A549 (cell line): ENCODE measurements at regions of chr2 and their contacts with region 1.

Region 1: GRCh38 chr2:10434886-10435819 is 13.0 kb downstream of the ODC1 start:
- DNase-seq: peak; percentile 80 to 91
- ATAC-seq: peak; percentile 60 to 87
- H3K4me3 ChIP-seq: no peak overlapping the region
- H3K27ac ChIP-seq: peak overlapping the region in 1 of 2 experiments; percentile 68; a peak in 4 of 6 replicates
- H3K4me1 ChIP-seq: peaks cover 18% of the 10 kb centered on the region
- CTCF ChIP-seq: peak; percentile 99
- EP300 ChIP-seq: no peak
- POLR2A ChIP-seq: no peak
- RAD21 ChIP-seq: peak; percentile 100

Region 2: GRCh38 chr2:9952846-9953503 is 482.2 kb before region 1 on chr2:
- CTCF ChIA-PET with region 1: no interaction called
- POLR2A ChIA-PET with region 1: no interaction called
- DNase-seq: no peak
- ATAC-seq: no peak
- H3K4me3 ChIP-seq: no peak overlapping the region
- H3K27ac ChIP-seq: no peak overlapping the region
- H3K4me1 ChIP-seq: no peaks in the 10 kb centered on the region
- CTCF ChIP-seq: no peak
- EP300 ChIP-seq: no peak
- POLR2A ChIP-seq: no peak
- RAD21 ChIP-seq: no peak

Region 3: GRCh38 chr2:9984217-9984739 is 450.9 kb before region 1 on chr2:
- CTCF ChIA-PET with region 1: interaction called, 11 read pairs
- POLR2A ChIA-PET with region 1: no interaction called
- DNase-seq: peak; percentile 46 to 90
- ATAC-seq: peak; percentile 63 to 89
- H3K4me3 ChIP-seq: no peak overlapping the region
- H3K27ac ChIP-seq: no peak overlapping the region
- H3K4me1 ChIP-seq: 0 out of 3 replicates have a peak, but pooled peaks cover 3% of the 10 kb centered on the region
- CTCF ChIP-seq: peak; percentile 77
- EP300 ChIP-seq: no peak
- POLR2A ChIP-seq: no peak
- RAD21 ChIP-seq: peak; percentile 61 to 66

Region 4: GRCh38 chr2:10097352-10098148 is 337.6 kb before region 1 on chr2:
- CTCF ChIA-PET with region 1: interaction called, 21 read pairs
- POLR2A ChIA-PET with region 1: no interaction called
- DNase-seq: peak; percentile 70 to 97
- ATAC-seq: peak; percentile 97 to 99
- H3K4me3 ChIP-seq: no peak overlapping the region
- H3K27ac ChIP-seq: no peak overlapping the region
- H3K4me1 ChIP-seq: peaks cover 5% of the 10 kb centered on the region
- CTCF ChIP-seq: peak; percentile 88
- EP300 ChIP-seq: no peak
- POLR2A ChIP-seq: no peak
- RAD21 ChIP-seq: peak; percentile 81 to 86

Region 5: DNA sequence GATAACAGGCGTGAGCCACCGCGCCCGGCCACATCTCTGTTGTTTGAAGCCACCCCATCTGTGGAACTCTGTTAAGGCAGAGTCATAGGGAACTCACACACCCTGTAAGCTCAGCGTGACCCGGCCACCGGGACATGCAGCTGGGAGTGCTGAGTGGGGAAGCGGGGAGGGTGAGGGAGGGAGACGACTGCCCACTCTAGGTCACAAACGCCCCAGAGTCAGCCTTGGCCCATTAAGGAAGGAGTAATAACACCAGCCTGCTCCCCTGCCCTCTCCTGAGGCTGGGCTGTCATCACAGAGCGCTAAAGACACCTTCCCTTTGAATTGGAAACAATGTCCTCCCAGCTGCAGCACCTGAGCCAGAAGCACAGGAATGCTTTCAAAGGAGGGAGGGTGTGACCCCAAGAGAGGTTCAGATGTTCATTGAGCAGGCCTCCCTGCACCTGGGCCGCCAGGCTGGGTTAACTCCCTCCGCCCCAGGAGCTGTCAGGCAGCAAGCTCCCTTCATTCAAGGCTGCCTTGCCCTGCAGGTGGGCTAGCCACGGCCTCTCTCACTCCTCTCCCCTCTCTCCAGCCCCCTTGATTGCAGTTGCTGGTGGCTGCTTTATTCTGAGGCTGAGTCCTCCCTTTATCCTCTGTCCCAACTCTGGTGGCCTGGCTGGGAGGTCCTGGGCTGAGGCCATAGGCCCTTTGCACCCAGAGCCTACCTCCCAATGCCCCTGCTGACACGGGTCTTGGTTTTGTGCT is 209.7 kb before region 1 on chr2:
- CTCF ChIA-PET with region 1: interaction called, 12 read pairs
- POLR2A ChIA-PET with region 1: no interaction called
- DNase-seq: no peak
- ATAC-seq: no peak; a peak in 1 of 6 replicates
- H3K4me3 ChIP-seq: no peak overlapping the region
- H3K27ac ChIP-seq: no peak overlapping the region
- H3K4me1 ChIP-seq: peaks cover 6% of the 10 kb centered on the region; the same call in 1 of the 3 replicates
- CTCF ChIP-seq: no peak
- EP300 ChIP-seq: no peak
- POLR2A ChIP-seq: no peak
- RAD21 ChIP-seq: no peak

Region 6: DNA sequence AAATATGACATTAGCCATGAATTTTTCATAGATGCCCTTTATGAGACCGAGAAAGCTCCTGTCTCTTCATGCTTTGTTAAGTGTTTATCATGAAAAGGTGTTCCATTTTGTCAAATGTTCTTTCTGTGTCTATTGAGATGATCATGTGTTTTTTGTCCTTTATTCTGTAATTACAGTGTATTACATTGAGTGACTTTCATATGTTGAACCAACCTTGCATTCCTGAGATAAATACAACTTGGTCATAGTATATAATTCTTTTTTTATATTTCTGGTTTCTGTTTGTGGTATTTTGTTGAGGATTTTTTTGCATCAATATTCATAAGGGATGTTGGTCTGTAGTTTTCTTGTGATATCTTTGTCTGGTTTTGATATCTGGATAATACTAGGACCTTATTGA is 185.4 kb before region 1 on chr2:
- CTCF ChIA-PET with region 1: no interaction called
- POLR2A ChIA-PET with region 1: no interaction called
- DNase-seq: no peak
- ATAC-seq: no peak
- H3K4me3 ChIP-seq: no peak overlapping the region
- H3K27ac ChIP-seq: no peak overlapping the region
- H3K4me1 ChIP-seq: peaks cover 9% of the 10 kb centered on the region
- CTCF ChIP-seq: no peak
- EP300 ChIP-seq: no peak
- POLR2A ChIP-seq: no peak
- RAD21 ChIP-seq: no peak

Region 7: DNA sequence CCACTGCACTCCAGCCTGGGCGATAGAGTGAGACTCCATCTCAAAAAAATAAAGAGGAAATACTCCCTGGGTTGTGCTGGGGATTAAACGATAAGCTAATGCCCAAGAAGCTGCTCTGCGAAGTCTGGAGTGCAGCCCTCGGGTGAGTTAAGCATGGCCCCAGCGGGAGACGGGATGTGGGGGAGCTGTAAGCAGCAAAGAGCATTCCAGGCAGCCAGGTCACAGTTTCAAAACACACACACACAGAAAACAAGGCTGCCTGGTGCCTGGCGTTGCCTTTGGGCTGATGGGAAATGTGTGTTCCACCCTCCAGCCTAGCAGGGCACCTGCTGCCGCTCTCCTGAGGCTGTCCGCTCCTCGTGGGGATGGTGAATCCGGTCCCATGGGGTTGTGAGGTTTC is 11.1 kb before region 1 on chr2:
- CTCF ChIA-PET with region 1: interaction called, 114 read pairs
- POLR2A ChIA-PET with region 1: no interaction called
- DNase-seq: no peak
- ATAC-seq: no peak
- H3K4me3 ChIP-seq: no peak overlapping the region
- H3K27ac ChIP-seq: no peak overlapping the region
- H3K4me1 ChIP-seq: no peaks in the 10 kb centered on the region
- CTCF ChIP-seq: no peak
- EP300 ChIP-seq: no peak
- POLR2A ChIP-seq: no peak
- RAD21 ChIP-seq: no peak

Region 8: GRCh38 chr2:10471956-10472355 is 36.8 kb after region 1 on chr2:
- CTCF ChIA-PET with region 1: interaction called, 18 read pairs
- POLR2A ChIA-PET with region 1: no interaction called
- DNase-seq: peak in 1 of 2 experiments; percentile 37
- ATAC-seq: peak; percentile 72 to 75
- H3K4me3 ChIP-seq: no peak overlapping the region
- H3K27ac ChIP-seq: no peak overlapping the region
- H3K4me1 ChIP-seq: no peaks in the 10 kb centered on the region
- CTCF ChIP-seq: no peak
- EP300 ChIP-seq: no peak
- POLR2A ChIP-seq: no peak
- RAD21 ChIP-seq: no peak

Region 9: DNA sequence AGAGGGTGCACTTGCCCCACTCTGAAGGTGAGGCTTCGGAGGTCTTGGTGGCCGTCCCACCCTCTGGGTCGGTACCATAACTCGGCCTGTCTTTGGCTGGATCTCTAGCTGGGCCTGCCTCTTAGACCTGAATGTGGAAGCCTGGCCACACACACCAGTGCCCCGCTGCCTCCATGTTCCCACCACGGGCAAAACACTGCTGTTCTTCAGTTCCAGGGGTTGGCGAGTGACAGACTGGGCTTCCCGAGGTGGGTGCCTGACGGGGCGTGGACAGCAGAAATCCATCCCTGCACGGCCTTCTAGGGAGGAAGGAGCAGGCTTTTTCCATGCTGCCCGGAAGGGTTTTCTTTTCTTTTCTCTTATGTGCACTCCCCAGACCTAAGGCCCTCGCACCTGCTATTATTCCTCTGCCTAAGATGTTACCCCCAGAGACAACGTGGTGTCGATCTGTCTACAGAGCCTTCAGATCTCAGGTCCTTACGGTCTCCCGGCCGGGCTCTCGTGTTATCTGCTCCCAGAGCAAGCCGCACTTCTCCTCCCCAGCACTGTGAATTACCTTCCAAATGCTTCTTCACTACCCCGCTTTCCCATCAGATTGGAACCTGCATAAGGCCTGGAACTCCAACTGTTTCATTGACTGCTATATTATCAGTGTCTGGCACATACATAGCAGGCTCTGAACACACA is 84.0 kb after region 1 on chr2:
- CTCF ChIA-PET with region 1: no interaction called
- POLR2A ChIA-PET with region 1: no interaction called
- DNase-seq: no peak
- ATAC-seq: no peak
- H3K4me3 ChIP-seq: no peak overlapping the region
- H3K27ac ChIP-seq: no peak overlapping the region
- H3K4me1 ChIP-seq: peaks cover 4% of the 10 kb centered on the region
- CTCF ChIP-seq: no peak
- EP300 ChIP-seq: no peak
- POLR2A ChIP-seq: no peak
- RAD21 ChIP-seq: no peak